ENCODE measurements at regions of chr7 and their contacts with region 1.

Region 1: GRCh38 chr7:106153891-106154449 is 41.9 kb upstream of the SYPL1 start:
- DNase-seq: peak; percentile 49 to 81 (median 60)
- H3K4me3 ChIP-seq: no peak overlapping the region
- H3K4me3 Mint-ChIP-seq: no peak overlapping the region
- H3K27ac ChIP-seq: no peak overlapping the region
- H3K27ac Mint-ChIP-seq: no peak overlapping the region
- H3K4me1 ChIP-seq: no peaks in the 10 kb centered on the region
- H3K4me1 Mint-ChIP-seq: peaks cover 0 to 3% (median 2%) of the 10 kb centered on the region in 3 donors
- H3K27me3 ChIP-seq: no peaks in the 10 kb centered on the region
- H3K27me3 Mint-ChIP-seq: peaks cover 8 to 29% of the 10 kb centered on the region in 2 donors

Region 2: GRCh38 chr7:106041140-106041717 is 112.7 kb before region 1 on chr7:
- CTCF ChIA-PET with region 1: interaction called, 14 read pairs
- POLR2A ChIA-PET with region 1: no interaction called
- DNase-seq: peak in 2 of 5 donors; percentile 10 to 29
- H3K4me3 ChIP-seq: no peak overlapping the region
- H3K4me3 Mint-ChIP-seq: no peak overlapping the region
- H3K27ac ChIP-seq: no peak overlapping the region
- H3K27ac Mint-ChIP-seq: peak overlapping the region in 3 of 8 donors; percentile 6 to 14 (median 8)
- H3K4me1 ChIP-seq: peaks cover 30% of the 10 kb centered on the region
- H3K4me1 Mint-ChIP-seq: peaks cover 15 to 31% (median 30%) of the 10 kb centered on the region in 3 donors
- H3K27me3 ChIP-seq: no peaks in the 10 kb centered on the region
- H3K27me3 Mint-ChIP-seq: peaks cover 2 to 11% of the 10 kb centered on the region in 2 donors

Region 3: GRCh38 chr7:106056513-106057203 is 97.3 kb before region 1 on chr7:
- CTCF ChIA-PET with region 1: interaction called, 193 read pairs
- POLR2A ChIA-PET with region 1: no interaction called
- DNase-seq: peak; percentile 49 to 79 (median 59)
- H3K4me3 ChIP-seq: no peak overlapping the region
- H3K4me3 Mint-ChIP-seq: peak overlapping the region in 1 of 7 donors; percentile 24
- H3K27ac ChIP-seq: no peak overlapping the region
- H3K27ac Mint-ChIP-seq: peak overlapping the region in 1 of 8 donors; percentile 31
- H3K4me1 ChIP-seq: peaks cover 14% of the 10 kb centered on the region
- H3K4me1 Mint-ChIP-seq: peaks cover 18 to 22% (median 21%) of the 10 kb centered on the region in 3 donors
- H3K27me3 ChIP-seq: no peaks in the 10 kb centered on the region
- H3K27me3 Mint-ChIP-seq: no peaks in the 10 kb centered on the region

Region 4: DNA sequence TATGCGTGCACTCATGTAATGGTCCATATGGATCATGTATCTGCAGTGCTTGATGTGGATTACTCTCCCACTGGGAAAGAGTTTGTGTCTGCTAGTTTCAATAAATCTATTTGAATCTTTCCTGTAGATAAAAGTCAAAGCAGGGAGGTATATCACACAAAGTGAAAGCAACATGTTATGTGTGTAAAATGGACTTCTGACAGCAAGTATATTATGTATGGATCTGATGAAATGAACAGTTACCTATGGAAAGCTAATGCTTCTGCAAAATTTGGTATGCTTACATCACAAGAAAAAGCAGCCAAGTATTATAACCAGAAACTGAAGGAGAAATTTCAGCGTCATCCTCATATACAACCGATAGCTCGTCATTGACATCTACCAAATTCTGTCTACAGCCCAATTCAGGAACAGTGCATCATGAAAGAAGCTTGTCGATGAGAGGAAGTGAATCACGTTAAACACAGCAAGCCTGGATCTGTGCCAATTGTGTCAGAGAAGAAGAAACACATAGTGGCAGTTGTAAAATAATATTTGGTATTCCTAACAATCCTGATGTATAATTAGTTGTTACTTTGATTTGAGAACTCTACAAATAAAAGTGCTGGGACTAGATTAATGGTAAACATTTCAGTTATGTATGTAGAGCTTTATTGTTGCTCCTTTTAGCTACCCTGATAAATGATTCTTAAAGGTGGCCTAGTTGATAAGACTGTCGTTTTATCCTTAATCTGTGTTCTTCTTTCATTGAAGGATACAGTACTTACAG is 27.6 kb before region 1 on chr7:
- CTCF ChIA-PET with region 1: interaction called, 12 read pairs
- POLR2A ChIA-PET with region 1: no interaction called
- DNase-seq: peak in 2 of 5 donors; percentile 6 to 42
- H3K4me3 ChIP-seq: no peak overlapping the region
- H3K4me3 Mint-ChIP-seq: peak overlapping the region in 3 of 7 donors; percentile 16 to 52 (median 47)
- H3K27ac ChIP-seq: no peak overlapping the region
- H3K27ac Mint-ChIP-seq: no peak overlapping the region
- H3K4me1 ChIP-seq: no peaks in the 10 kb centered on the region
- H3K4me1 Mint-ChIP-seq: peaks cover 7% of the 10 kb centered on the region in 3 donors
- H3K27me3 ChIP-seq: no peaks in the 10 kb centered on the region
- H3K27me3 Mint-ChIP-seq: peaks cover 5 to 23% of the 10 kb centered on the region in 2 donors

Region 5: GRCh38 chr7:106166655-106167342 is 12.8 kb after region 1 on chr7:
- CTCF ChIA-PET with region 1: interaction called, 21 read pairs
- POLR2A ChIA-PET with region 1: no interaction called
- DNase-seq: peak in 3 of 5 donors; percentile 10 to 34 (median 12)
- H3K4me3 ChIP-seq: no peak overlapping the region
- H3K4me3 Mint-ChIP-seq: no peak overlapping the region
- H3K27ac ChIP-seq: no peak overlapping the region
- H3K27ac Mint-ChIP-seq: peak overlapping the region in 1 of 8 donors; percentile 54
- H3K4me1 ChIP-seq: no peaks in the 10 kb centered on the region
- H3K4me1 Mint-ChIP-seq: peaks cover 0 to 4% (median 0%) of the 10 kb centered on the region in 3 donors
- H3K27me3 ChIP-seq: no peaks in the 10 kb centered on the region
- H3K27me3 Mint-ChIP-seq: peaks cover 5 to 30% of the 10 kb centered on the region in 2 donors

Measured in CD8-positive, alpha-beta memory T cell (primary cell).